ENCODE measurements at regions of chr15 and their contacts with region 1.

Region 1: DNA sequence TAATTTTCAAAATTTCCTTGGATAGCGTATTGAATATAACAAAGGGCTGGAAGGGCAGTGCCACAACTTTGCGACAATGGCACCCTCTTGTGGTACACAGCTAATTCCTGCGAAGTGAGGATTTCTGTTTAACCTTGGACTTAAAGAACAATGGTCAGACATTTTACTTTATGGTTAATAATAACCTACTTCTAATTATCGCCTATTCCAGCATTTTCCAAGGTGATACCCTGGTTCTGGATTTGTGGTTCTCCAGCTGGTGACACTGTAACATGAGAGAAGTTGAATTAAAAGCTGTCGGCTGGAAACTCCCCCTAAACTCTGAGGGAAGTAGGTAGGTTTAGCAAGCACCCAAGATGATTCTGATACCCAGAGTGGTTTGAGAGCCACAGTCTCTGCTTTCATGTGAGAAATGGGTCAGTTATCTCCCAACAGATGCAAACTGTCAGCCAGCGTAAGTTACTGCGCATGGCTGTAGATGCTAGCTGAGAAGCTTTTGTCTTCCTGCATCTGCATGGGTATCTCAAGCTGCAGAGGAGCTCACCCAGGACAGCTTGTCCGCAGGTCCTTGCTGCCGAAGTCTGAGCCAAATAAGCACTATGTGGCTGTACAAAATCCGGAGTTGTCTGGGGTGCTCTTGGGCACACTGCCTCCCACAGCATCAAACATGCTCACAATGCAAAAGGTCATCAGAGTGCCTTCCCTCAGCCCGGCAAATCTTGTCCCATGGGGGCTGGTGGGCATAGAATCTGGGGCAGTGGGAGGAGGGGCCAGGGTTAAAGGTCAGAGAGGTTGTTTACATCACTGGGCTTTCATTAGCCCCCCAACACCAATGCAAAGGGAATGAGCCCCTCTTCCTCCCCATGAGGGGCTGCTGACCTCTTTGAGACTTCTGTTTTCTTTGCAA is 6.6 kb upstream of the CHSY1 start:
- DNase-seq: no peak
- H3K4me3 ChIP-seq: no peak overlapping the region
- H3K27ac ChIP-seq: no peak overlapping the region
- H3K4me1 ChIP-seq: peaks cover 25% of the 10 kb centered on the region
- H3K27me3 ChIP-seq: no peaks in the 10 kb centered on the region
- CTCF ChIP-seq: peak; percentile 87

Region 2: GRCh38 chr15:101019366-101019896 is 239.1 kb before region 1 on chr15:
- intact Hi-C with region 1: loop called (anchors 2 kb)
- DNase-seq: no peak
- H3K4me3 ChIP-seq: no peak overlapping the region
- H3K27ac ChIP-seq: no peak overlapping the region
- H3K4me1 ChIP-seq: peaks cover 25% of the 10 kb centered on the region
- H3K27me3 ChIP-seq: no peaks in the 10 kb centered on the region
- CTCF ChIP-seq: no peak

Region 3: DNA sequence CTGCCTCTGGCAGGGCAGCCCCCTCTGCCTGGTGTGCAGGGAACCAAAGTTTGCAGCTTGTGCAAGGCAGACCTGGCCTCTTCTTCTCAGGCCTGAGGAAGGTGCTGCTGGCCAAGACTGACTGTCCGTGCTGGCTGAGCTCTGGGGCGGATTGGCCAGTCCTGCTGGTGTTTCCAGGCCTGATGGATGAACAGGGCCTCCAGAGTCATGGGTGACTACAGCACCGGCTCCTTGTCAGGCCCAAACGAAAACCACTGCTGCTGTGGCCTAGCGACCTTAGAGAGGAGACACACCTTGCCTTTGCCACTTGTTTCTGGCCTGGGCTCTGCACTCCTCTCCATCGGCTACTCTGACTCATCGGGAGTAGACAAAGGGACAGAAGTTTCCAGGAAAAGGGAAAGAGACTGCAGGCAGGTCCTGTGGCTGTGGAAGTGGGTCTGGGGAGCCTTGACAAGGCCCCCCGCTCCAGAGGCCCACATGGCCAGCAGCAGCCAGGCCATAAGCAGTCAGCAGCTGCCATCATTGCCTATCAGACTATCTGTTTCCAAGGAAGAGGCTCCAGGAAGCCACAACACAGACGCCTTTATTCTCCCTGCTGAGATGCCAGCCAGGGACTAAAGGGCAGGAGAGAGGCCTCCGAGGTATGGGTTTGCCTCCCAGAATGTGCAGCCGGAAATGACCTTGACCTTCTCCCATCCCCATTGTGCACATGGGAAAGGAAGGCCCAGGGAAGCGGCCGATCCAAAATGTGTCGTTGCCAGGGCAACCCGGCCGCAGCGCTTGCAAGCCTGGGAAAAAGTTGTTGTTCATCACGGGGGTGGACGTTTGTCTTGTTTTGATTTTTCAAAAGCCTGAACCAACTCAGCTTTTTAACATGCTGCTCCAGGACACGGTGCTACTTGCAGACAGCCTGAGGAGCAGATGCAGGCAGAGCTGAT is 167.1 kb before region 1 on chr15:
- intact Hi-C with region 1: loop called (anchors 5 kb)
- DNase-seq: peak; percentile 66
- H3K4me3 ChIP-seq: peak overlapping the region; percentile 10
- H3K27ac ChIP-seq: peak overlapping the region; percentile 84
- H3K4me1 ChIP-seq: peaks cover 45% of the 10 kb centered on the region
- H3K27me3 ChIP-seq: no peaks in the 10 kb centered on the region
- CTCF ChIP-seq: no peak